ENCODE measurements at regions of chr11 and their contacts with region 1.

Region 1: DNA sequence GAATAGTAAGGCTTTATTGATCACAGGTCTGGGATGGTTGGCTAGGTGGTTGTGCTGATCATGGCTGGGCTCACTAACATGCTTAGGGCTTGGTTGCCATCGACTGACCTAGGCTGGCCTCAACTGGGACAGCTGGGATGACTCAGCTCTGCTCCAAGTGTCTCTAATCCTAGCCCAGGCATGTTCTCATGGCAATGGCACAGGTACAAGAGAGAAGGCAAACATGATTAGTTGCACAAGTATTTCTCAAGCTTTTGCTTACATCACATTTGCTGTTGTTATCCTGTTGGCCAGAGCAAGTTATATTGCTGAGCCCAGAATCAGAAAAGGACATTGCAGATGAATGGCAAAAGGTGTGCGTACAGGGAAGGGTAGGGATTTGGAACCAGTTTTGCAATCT is 68.5 kb upstream of the SLC35C1 start:
- DNase-seq: peak; percentile 86 to 94
- ATAC-seq: peak; percentile 76 to 78
- H3K4me3 ChIP-seq: no peak overlapping the region
- H3K27ac ChIP-seq: peak overlapping the region; percentile 85 to 93 (median 92)
- H3K4me1 ChIP-seq: peaks cover 52 to 59% of the 10 kb centered on the region in 2 donors
- H3K27me3 ChIP-seq: no peaks in the 10 kb centered on the region
- CTCF ChIP-seq: no peak
- POLR2A ChIP-seq: no peak

Region 2: GRCh38 chr11:44110231-44110679 is 1626.2 kb before region 1 on chr11:
- in situ Hi-C with region 1: no loop called
- intact Hi-C with region 1: loop called (anchors 10 kb)
- DNase-seq: peak; percentile 20 to 50
- ATAC-seq: peak; percentile 27 to 50
- H3K4me3 ChIP-seq: no peak overlapping the region
- H3K27ac ChIP-seq: no peak overlapping the region
- H3K4me1 ChIP-seq: peaks cover 29 to 43% of the 10 kb centered on the region in 2 donors
- H3K27me3 ChIP-seq: no peaks in the 10 kb centered on the region
- CTCF ChIP-seq: peak; percentile 56 to 80 (median 67)
- POLR2A ChIP-seq: no peak

Region 3: DNA sequence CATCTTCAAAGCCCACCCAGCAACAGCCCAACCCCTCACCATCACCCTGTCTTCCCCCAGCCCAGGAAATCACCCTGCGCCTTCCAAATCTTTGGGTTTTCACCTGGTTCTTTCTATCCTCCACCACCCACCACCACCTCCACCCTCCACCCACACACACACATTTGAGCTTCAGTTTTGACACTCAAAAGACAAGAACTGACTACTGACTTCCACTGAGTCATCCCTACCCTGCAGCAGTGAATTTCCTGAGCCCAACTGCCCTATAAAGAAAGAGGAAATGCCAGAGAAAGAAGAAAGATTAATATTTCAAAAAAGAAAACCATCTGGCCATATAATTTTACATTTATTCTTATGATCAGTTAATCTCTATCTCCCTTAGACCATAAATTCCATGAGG is 208.5 kb before region 1 on chr11:
- in situ Hi-C with region 1: no loop called
- intact Hi-C with region 1: no loop called
- DNase-seq: no peak
- ATAC-seq: no peak
- H3K4me3 ChIP-seq: no peak overlapping the region
- H3K27ac ChIP-seq: no peak overlapping the region
- H3K4me1 ChIP-seq: no peaks in the 10 kb centered on the region
- H3K27me3 ChIP-seq: no peaks in the 10 kb centered on the region
- CTCF ChIP-seq: no peak
- POLR2A ChIP-seq: no peak

Region 4: GRCh38 chr11:45665206-45665932 is 71.1 kb before region 1 on chr11 and contains the start of gene CHST1:
- in situ Hi-C with region 1: no loop called
- intact Hi-C with region 1: loop called (anchors 5 kb)
- DNase-seq: peak; percentile 16 to 43
- ATAC-seq: peak; percentile 54 to 55
- H3K4me3 ChIP-seq: peak within 1 kb of the TSS; percentile 61 to 87 (median 72)
- H3K27ac ChIP-seq: peak within 1 kb of the TSS; percentile 48 to 67 (median 61)
- H3K4me1 ChIP-seq: peaks cover 9 to 11% of the 10 kb centered on the region in 2 donors
- H3K27me3 ChIP-seq: peaks cover 24 to 27% (median 26%) of the 10 kb centered on the region in 3 donors
- CTCF ChIP-seq: no peak
- POLR2A ChIP-seq: peak; percentile 54 to 64
- total RNA-seq, gene CHST1: 4.5 to 5.6 (median 5.0) TPM

Region 5: DNA sequence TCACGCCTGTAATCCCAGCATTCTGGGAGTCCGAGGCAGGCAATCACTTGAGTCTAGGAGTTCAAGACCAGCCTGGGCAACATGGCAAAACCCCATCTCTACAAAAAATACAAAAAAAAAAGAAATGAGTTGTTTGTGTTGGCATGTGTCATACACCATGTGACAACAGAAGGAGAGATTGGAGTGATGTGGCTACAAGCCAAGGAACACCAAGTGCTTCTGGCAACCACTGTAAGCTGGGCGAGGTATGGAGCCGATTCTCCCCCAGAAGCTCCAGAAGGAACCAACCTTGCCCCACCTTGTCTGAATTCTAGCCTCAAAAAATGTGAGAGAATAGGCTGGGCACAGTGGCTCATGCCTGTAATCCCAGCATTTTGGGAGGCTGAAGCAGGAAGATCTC is 29.4 kb after region 1 on chr11:
- in situ Hi-C with region 1: no loop called
- intact Hi-C with region 1: loop called (anchors 5 kb)
- DNase-seq: no peak
- ATAC-seq: peak in 1 of 2 donors; percentile 55
- H3K4me3 ChIP-seq: no peak overlapping the region
- H3K27ac ChIP-seq: peak overlapping the region in 3 of 4 donors; percentile 31 to 77 (median 55)
- H3K4me1 ChIP-seq: peaks cover 0 to 22% of the 10 kb centered on the region in 2 donors
- H3K27me3 ChIP-seq: no peaks in the 10 kb centered on the region
- CTCF ChIP-seq: no peak
- POLR2A ChIP-seq: no peak

Region 6: DNA sequence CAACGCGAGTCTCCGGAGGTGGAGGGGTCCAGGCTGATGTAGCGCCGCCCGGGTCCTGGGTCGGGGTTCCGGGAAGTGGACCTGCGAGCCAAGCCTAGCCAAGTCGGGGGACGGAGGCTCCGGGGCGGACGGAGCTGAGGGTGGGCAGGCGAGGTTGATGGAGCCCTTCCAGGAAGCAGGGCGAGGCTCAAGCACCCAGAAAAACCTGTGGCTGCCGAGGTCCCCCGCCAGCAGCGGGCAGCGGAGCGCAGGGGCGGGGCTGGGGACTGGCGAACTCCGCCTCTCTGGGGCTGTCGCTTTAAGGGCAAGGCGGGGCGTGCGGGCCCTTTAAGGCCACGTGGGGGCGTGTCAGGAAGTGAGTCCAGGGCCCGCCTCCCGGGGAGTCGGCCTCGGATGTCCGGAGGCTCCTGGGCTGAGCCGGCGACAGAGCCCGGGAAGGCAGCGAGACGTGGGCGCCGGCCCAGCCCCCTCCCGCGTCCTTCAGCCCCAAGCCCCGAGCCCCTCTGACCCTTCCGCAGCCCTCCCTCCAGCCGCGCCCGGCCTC is 68.4 kb after region 1 on chr11 and contains the start of gene SLC35C1:
- in situ Hi-C with region 1: no loop called
- intact Hi-C with region 1: loop called (anchors 1 kb)
- DNase-seq: peak; percentile 96
- ATAC-seq: peak; percentile 87
- H3K4me3 ChIP-seq: peak within 1 kb of the TSS; percentile 76 to 96 (median 86)
- H3K27ac ChIP-seq: peak within 1 kb of the TSS; percentile 86 to 94 (median 91)
- H3K4me1 ChIP-seq: peaks cover 28 to 29% of the 10 kb centered on the region in 2 donors
- H3K27me3 ChIP-seq: no peaks in the 10 kb centered on the region
- CTCF ChIP-seq: peak in 4 of 5 experiments; percentile 25 to 48 (median 34)
- POLR2A ChIP-seq: peak; percentile 88 to 94
- total RNA-seq, gene SLC35C1: 4.8 to 11.7 (median 7.8) TPM

Region 7: GRCh38 chr11:45859661-45860140 is 123.3 kb after region 1 on chr11:
- in situ Hi-C with region 1: no loop called
- intact Hi-C with region 1: loop called (anchors 5 kb)
- DNase-seq: peak; percentile 91 to 96
- ATAC-seq: peak; percentile 70 to 74
- H3K4me3 ChIP-seq: peak overlapping the region in 1 of 4 donors; percentile 19
- H3K27ac ChIP-seq: peak overlapping the region; percentile 91 to 99 (median 99)
- H3K4me1 ChIP-seq: peaks cover 67 to 69% of the 10 kb centered on the region in 2 donors
- H3K27me3 ChIP-seq: no peaks in the 10 kb centered on the region
- CTCF ChIP-seq: no peak
- POLR2A ChIP-seq: peak; percentile 55 to 59

Measured in gastrocnemius medialis (tissue), 4 donors.